Left colon (tissue), 2 donors: ENCODE measurements at regions of chr11 and their contacts with region 1.

Region 1: DNA sequence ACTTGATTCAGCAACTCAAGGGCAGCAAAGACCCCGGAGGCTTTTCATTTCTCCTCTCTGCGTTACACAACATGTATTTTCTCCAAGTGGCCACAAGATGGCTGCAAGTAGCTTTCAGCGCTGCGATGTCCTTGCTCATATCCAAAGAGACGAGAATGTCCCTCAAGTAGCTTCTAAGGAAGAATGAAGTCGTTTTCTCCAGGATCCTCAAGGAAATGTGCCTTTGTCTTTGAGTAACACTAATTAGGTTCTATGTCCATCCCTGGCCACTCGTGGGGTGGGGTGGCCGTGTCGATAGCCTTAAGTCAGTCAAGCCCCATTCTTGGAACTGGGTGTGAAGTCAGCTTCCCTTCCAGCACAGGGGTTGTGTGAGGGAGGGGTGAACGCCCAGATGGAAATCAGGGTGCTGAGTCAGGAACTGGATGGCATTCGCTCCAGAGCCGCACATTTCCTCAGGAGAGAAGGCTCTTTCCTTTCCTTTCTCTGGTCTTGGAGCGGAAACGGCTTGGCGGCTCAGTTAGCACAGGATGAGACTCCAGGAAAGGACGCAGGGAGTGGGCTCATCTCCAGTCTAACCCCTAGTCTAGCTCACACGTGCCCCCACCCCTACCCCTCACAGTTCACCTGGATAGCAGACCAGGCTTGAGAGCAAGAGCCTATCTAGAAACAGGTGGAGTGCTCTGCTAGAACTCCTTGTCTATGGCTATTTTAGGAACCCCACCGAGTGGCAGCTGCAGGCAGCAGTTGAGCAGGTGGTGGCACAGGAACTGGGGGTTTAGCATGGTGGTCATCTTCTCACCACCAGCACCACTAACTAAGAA is 44.3 kb downstream of the NNMT start:
- DNase-seq: peak; percentile 27 to 32
- ATAC-seq: peak; percentile 90

Region 2: DNA sequence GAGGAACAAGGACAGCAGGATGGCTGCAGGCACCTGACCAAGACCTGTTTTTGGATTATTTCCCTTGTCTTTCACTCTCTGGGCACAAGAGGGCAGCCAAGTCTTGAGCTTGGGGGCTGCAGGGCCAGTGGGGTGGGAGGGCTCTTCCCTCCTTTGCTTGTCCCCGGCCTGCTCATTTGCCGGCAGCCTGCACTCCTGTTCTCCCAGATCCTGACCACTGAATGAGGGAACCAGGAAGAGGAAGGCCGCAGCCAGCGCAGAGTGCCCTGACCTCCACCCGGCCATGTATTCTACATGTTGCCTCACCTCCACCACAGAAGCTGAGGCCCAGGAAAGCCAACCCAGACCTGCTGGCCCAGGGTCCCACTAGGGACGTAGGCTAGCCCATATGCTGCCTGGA is 59.8 kb before region 1 on chr11:
- intact Hi-C with region 1: no loop called
- DNase-seq: peak in 1 of 2 donors; percentile 41
- ATAC-seq: peak; percentile 84

Region 3: GRCh38 chr11:114439229-114440120 is 99.0 kb after region 1 on chr11 and contains the start of gene REXO2:
- intact Hi-C with region 1: loop called in 1 of 2 experiments (anchors 10 kb)
- DNase-seq: peak; percentile 97 to 98
- ATAC-seq: peak; percentile 99
- total RNA-seq, gene REXO2: 37.8 to 41.8 TPM

Region 4: GRCh38 chr11:114713756-114714155 is 373.2 kb after region 1 on chr11:
- intact Hi-C with region 1: no loop called
- DNase-seq: no peak
- ATAC-seq: no peak

Region 5: DNA sequence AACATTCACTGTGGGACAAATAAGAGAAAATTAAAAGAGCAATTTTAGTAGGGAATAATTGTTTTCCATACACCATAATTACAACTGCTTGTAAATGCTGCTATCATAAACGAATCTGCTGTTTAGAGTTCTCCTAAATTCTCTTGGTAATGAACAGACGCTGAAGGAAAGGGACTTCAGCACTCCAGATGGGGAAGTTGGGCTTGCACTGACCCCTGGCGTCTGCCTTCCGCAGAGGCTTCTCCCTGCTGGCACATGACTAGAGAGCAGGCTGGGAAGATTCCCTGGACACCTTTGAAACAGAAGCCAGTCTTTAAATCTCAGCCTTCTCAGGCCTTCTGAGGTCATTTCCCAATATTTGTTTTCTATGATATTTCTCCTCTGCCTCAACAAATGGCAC is 421.9 kb after region 1 on chr11:
- intact Hi-C with region 1: loop called in 1 of 2 experiments (anchors 5 kb)
- DNase-seq: peak; percentile 76 to 86
- ATAC-seq: peak; percentile 98